Activated naive CD4-positive, alpha-beta T cell treated with anti-CD3 and anti-CD28 coated beads for 36 hours (primary cell): ENCODE measurements at regions of chr5 and their contacts with region 1.

Region 1: DNA sequence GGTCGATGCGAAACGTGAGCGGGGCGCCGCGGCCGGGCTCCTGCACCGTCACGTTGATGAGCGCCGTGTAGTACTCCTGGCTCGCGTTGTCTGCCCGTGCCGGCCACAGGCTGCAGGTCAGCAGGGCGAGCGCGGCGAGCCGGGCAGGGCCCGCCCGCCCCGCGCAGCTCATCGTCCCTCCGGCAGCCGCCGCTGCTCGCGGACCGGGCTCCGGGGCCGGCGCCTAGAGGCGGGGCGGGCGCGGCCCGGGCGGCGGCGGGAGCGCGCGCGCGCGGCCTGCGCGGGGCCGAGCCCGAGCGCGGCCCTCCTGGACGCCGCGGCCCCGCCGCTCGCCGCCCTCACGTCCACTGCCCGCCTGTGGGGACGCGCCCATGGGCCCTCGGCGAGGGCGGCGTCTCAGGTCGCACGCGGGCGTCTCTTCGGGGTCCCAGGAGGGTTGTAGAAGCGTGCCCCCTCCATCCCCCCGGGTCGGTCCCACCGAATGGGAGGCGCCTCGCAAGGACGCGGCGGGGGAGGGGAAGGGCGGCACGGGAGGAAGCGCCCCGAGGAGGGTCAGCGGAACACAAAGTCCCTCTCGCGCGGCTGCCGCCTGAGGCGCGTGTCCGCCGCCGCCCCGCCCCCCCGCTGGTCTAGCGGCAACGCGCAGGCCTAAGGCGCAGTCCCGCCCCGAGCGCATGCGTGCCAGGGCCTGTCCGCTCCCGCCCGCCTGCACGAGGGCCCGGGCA is at the start of gene RNF130:
- DNase-seq: peak; percentile 86
- H3K4me3 Mint-ChIP-seq: peak within 1 kb of the TSS; percentile 75
- H3K27ac Mint-ChIP-seq: peak within 1 kb of the TSS; percentile 32
- H3K4me1 Mint-ChIP-seq: peaks cover 23% of the 10 kb centered on the region
- H3K27me3 Mint-ChIP-seq: peaks cover 3% of the 10 kb centered on the region
- total RNA-seq, gene RNF130: 10.3 to 11.9 TPM

Region 2: DNA sequence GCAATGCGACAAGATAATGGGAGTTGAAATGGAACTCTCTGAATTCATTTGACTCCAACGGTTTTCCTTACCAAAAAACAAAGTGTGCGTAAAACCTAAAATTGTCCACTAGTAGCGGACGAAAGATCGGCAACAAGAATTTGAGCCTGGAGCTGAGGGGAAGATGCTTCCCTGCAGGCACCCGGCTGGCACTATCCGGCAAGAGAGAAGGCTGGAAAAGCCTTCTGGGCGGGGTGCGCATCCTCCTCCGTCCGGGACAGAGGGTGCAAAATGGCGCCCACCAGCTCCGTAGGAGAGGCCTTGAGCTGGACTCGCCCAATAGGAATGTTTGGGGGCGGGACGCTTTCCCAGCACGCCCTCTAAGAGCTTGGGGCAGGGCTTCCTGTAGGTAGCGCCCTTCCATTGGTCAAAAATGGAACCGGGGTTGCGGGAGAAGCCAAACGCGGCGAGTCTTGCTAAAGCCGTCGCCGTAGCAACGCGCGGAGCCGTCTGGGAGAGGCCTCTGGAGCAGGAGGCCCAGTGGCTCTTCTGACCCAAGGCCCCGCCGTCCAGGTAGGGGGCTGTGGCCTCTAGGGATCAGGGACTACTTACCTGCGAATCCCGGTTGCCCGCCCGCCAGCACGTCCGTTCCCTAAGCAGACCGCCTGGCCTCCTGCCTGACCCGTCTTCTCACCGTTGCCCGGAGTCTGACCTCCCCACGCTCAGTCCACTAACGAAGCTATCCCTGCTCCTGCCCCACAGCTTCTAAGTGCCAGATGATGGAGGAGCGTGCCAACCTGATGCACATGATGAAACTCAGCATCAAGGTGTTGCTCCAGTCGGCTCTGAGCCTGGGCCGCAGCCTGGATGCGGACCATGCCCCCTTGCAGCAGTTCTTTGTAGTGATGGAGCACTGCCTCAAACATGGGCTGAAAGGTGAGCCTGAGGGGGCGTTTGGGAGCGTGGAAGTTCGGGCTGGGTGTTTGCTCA is 512.1 kb before region 1 on chr5:
- CTCF ChIA-PET with region 1: no interaction called
- intact Hi-C with region 1: loop called (anchors 10 kb)
- DNase-seq: peak; percentile 98
- H3K4me3 Mint-ChIP-seq: peak overlapping the region; percentile 93
- H3K27ac Mint-ChIP-seq: peak overlapping the region; percentile 91
- H3K4me1 Mint-ChIP-seq: peaks cover 14% of the 10 kb centered on the region
- H3K27me3 Mint-ChIP-seq: no peaks in the 10 kb centered on the region

Region 3: DNA sequence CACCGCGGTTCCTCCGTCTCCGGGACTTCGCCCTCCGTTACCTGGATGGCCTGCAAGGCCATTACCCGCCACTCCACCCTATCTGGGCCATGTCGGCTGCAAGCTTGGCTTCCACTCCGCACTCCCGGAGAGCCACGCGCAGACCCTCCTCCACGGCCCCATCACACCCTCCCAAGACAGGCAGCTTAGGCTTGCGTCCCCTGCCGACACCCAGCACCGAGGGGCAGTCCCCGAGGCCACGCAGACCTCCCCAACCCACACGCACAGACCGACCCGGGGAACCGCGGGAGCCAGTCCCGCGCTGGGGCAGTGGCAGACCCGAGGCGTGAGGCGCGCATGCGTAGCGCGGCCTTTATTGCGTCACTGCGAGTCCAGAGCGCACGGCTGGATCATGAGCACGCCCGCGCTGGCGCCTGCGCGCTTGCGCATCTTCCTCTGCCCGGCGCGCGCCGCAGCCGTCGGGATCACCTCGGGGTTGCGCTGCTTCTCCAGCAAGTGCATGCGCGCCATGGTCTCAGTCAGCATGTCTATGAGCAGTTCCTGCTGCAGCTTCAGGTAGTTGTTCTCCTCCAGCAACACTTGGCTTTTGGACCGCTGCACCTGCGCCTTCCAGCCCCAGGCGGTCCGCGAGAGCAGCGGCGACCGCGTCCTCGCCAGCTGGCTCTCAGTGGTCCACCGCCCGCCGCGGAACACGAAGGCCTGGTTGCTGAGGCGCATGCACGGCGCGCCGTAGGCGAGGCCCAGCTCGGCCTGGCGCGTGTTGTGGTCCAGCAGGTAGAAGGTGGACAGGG is 393.3 kb before region 1 on chr5:
- CTCF ChIA-PET with region 1: no interaction called
- intact Hi-C with region 1: loop called (anchors 1 kb)
- DNase-seq: peak; percentile 94
- H3K4me3 Mint-ChIP-seq: peak overlapping the region; percentile 99
- H3K27ac Mint-ChIP-seq: peak overlapping the region; percentile 95
- H3K4me1 Mint-ChIP-seq: peaks cover 36% of the 10 kb centered on the region
- H3K27me3 Mint-ChIP-seq: no peaks in the 10 kb centered on the region

Region 4: GRCh38 chr5:180007582-180007981 is 64.1 kb before region 1 on chr5:
- CTCF ChIA-PET with region 1: no interaction called
- intact Hi-C with region 1: loop called (anchors 5 kb)
- DNase-seq: no peak
- H3K4me3 Mint-ChIP-seq: no peak overlapping the region
- H3K27ac Mint-ChIP-seq: no peak overlapping the region
- H3K4me1 Mint-ChIP-seq: peaks cover 20% of the 10 kb centered on the region
- H3K27me3 Mint-ChIP-seq: no peaks in the 10 kb centered on the region

Region 5: GRCh38 chr5:180034564-180034963 is 37.1 kb before region 1 on chr5:
- CTCF ChIA-PET with region 1: no interaction called
- intact Hi-C with region 1: no loop called
- DNase-seq: no peak
- H3K4me3 Mint-ChIP-seq: no peak overlapping the region
- H3K27ac Mint-ChIP-seq: no peak overlapping the region
- H3K4me1 Mint-ChIP-seq: no peaks in the 10 kb centered on the region
- H3K27me3 Mint-ChIP-seq: no peaks in the 10 kb centered on the region